Gastrocnemius medialis (tissue), 4 donors: ENCODE measurements at regions of chr9 and their contacts with region 1.

Region 1: DNA sequence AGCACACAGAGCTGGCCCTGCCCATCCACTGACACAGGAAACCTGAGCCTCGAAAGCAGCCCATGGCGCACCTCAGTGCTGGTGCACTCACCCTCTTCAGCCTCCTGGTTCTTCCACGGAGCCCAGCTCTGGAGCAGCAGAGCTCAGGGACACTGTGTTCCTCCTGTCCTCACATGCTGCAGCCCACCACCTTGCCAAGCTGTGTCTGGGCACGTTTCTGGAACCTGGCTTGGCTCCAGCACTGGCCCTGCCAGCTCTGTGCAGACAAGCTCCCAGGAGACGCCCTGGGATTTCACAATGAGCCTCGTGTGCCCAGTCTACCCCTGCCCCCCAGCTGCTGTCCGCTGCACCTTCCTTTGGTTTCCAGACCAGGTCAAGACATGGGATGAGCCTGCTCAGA is 119.5 kb downstream of the SYK start:
- DNase-seq: peak; percentile 95 to 99
- ATAC-seq: peak; percentile 77 to 82
- H3K4me3 ChIP-seq: no peak overlapping the region
- H3K27ac ChIP-seq: peak overlapping the region; percentile 81 to 93 (median 92)
- H3K4me1 ChIP-seq: peaks cover 21 to 25% of the 10 kb centered on the region in 2 donors
- H3K27me3 ChIP-seq: no peaks in the 10 kb centered on the region
- CTCF ChIP-seq: peak in 1 of 5 experiments; percentile 19
- POLR2A ChIP-seq: peak in 1 of 2 donors; percentile 46

Region 2: DNA sequence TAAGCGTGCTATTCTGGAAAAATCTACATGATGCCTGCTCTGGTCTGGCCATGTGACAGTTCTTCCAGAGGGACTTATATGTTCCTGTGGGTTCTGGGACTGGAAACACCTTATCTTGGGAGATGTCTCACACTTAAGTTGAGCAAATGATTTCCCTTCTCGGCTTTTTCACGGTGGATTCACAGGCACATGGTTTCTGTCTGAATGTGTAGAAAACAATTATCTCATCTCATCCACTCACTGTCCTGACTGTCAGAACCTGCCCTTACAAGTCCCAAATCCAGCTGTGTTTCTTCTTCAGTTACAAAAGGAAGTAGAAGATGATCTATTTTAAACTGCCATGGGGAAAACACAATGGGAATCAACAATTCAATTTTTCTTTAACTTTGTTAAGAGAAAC is 64.5 kb after region 1 on chr9:
- in situ Hi-C with region 1: loop called in 1 of 4 experiments (anchors 10 kb)
- intact Hi-C with region 1: no loop called
- DNase-seq: no peak
- ATAC-seq: no peak
- H3K4me3 ChIP-seq: no peak overlapping the region
- H3K27ac ChIP-seq: no peak overlapping the region
- H3K4me1 ChIP-seq: no peaks in the 10 kb centered on the region
- H3K27me3 ChIP-seq: no peaks in the 10 kb centered on the region
- CTCF ChIP-seq: no peak
- POLR2A ChIP-seq: no peak

Region 3: DNA sequence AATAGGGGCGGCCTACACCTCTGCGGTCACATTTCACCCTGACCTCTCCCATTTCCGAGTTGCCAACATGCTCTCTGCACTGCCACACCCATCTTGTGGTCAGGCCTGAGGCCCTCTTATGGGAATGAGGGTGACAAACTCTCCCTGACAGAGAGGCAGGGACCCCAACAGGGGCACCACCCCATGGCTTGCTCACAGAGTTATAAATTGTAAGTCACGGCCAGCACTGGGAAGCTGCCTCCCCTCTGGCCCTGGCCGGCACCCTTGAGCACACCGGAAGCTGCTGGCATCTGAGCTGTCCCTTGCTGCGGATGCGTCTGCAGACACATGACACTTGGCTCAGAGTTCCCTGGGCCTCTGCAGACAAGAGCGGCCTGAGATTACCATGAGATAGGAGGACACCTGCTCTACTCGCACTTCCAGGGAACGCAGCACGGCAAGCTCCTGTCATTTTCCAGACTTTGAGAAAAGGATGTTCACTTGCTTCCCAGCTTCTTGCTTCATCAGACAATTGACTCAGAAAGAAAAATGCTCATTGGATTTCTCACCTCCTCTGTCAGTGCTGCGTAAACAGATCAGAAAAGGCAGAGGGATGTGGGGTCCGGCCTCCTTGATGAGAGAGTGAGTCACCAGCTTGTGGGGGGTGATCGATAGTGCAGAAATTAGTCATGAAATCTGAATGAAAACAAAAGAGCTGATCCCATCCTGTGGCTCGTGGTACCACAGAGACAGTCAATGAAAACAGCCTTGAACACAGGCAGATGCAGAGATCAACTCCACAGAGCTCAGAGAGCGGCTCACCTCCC is 150.3 kb after region 1 on chr9:
- in situ Hi-C with region 1: no loop called
- intact Hi-C with region 1: loop called (anchors 2 kb)
- DNase-seq: peak; percentile 85 to 91
- ATAC-seq: peak; percentile 93 to 94
- H3K4me3 ChIP-seq: no peak overlapping the region
- H3K27ac ChIP-seq: peak overlapping the region; percentile 82 to 92 (median 87)
- H3K4me1 ChIP-seq: peaks cover 26 to 31% of the 10 kb centered on the region in 2 donors
- H3K27me3 ChIP-seq: no peaks in the 10 kb centered on the region
- CTCF ChIP-seq: no peak
- POLR2A ChIP-seq: peak; percentile 46 to 51

Region 4: DNA sequence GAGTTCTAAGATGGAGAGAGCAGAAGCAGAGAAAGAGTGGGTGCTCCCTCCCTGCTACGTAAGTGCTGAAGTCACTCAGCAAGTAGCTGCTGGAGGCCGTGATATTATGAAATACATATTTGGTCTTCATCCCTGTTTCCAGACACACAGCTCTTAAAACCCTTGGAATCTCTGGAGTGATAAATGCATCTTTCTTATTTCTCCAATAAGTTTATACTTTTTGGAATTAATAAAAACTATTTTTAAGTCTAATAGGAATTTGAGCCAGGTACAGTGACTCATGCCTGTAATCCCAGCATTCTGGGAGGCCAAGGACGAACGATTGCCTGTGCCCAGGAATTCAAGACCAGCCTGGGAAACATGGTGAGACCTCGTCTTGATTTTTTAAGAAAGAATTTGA is 380.1 kb after region 1 on chr9:
- in situ Hi-C with region 1: no loop called
- intact Hi-C with region 1: loop called (anchors 5 kb)
- DNase-seq: no peak
- ATAC-seq: peak; percentile 34 to 42
- H3K4me3 ChIP-seq: no peak overlapping the region
- H3K27ac ChIP-seq: peak overlapping the region; percentile 78 to 90 (median 84)
- H3K4me1 ChIP-seq: peaks cover 61 to 68% of the 10 kb centered on the region in 2 donors
- H3K27me3 ChIP-seq: no peaks in the 10 kb centered on the region
- CTCF ChIP-seq: no peak
- POLR2A ChIP-seq: no peak

Region 5: GRCh38 chr9:91483189-91483691 is 562.1 kb after region 1 on chr9:
- in situ Hi-C with region 1: no loop called
- intact Hi-C with region 1: loop called (anchors 5 kb)
- DNase-seq: peak in 1 of 2 donors; percentile 56
- ATAC-seq: peak; percentile 79 to 93
- H3K4me3 ChIP-seq: peak overlapping the region in 2 of 4 donors; percentile 14 to 16
- H3K27ac ChIP-seq: peak overlapping the region; percentile 62 to 76 (median 71)
- H3K4me1 ChIP-seq: peaks cover 7 to 12% of the 10 kb centered on the region in 2 donors
- H3K27me3 ChIP-seq: no peaks in the 10 kb centered on the region
- CTCF ChIP-seq: no peak
- POLR2A ChIP-seq: no peak